ENCODE measurements at regions of chr16 and their contacts with region 1.

Region 1: DNA sequence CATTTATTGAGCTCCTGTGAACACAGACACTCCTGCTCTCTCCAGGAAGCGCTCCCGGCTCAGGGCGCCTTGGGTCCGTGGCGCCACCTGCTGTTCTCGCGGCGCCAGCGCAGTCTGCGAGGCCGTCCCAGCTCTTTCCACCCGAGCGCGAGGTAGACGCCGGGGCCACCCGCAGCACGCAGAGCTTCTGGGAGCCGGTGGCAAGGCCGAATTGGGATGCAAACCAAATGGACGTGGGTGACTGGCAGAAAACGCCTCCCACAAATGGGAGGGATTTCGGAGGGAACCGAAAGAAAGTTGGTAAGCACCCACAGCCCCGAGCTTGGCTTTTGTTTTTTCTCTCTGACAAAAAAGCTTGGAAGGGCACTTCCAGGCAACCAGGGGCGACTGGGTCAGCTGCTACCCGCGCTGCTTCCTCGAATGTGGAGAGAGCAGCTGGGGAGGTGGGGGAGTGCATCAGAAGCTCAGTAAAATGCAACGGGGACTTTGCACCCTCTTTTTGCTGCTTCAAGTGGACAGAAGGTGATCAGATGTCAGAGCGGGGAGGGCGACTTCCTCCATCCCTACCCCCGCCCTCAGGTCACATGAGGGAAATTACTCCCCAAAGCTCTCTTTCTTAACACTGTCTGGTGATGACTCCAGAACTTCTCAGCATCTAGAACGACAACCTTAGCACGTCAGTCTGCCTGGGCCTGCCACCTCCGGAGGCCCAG is 13.5 kb upstream of the N4BP1 start:
- DNase-seq: peak; percentile 70 to 84 (median 82)
- ATAC-seq: peak; percentile 93 to 96
- H3K4me3 Mint-ChIP-seq: peak overlapping the region; percentile 71 to 90 (median 86)
- H3K27ac Mint-ChIP-seq: peak overlapping the region; percentile 71 to 97 (median 92)
- H3K4me1 Mint-ChIP-seq: peaks cover 15 to 48% (median 30%) of the 10 kb centered on the region in 4 donors
- H3K27me3 Mint-ChIP-seq: no peaks in the 10 kb centered on the region

Region 2: DNA sequence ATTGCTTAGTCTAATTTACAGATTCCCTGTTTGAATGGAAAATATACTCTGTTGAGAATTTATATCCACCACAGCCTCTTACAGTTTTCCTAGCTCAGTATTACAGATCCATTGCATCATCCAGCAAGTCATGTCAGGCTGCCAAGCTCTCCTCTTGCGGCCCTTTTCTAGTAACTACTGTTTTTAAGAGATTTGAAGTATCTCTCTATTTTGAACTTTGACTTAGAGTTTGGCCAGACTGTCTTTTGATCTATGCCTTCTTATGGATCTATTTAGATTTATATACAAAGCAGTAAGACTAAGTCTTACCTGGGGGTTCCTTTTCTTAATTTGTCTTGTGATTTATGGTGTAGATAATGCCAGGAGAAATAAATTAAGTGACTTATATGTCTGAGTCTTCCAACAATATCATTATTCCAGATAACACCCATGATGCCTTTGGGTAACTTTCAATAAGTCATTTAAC is 323.0 kb before region 1 on chr16:
- POLR2A ChIA-PET with region 1: no interaction called
- DNase-seq: no peak
- ATAC-seq: no peak
- H3K4me3 Mint-ChIP-seq: no peak overlapping the region
- H3K27ac Mint-ChIP-seq: peak overlapping the region in 8 of 10 donors; percentile 0 to 69 (median 14)
- H3K4me1 Mint-ChIP-seq: peaks cover 0 to under 1% (median 0%) of the 10 kb centered on the region in 4 donors
- H3K27me3 Mint-ChIP-seq: no peaks in the 10 kb centered on the region

Region 3: DNA sequence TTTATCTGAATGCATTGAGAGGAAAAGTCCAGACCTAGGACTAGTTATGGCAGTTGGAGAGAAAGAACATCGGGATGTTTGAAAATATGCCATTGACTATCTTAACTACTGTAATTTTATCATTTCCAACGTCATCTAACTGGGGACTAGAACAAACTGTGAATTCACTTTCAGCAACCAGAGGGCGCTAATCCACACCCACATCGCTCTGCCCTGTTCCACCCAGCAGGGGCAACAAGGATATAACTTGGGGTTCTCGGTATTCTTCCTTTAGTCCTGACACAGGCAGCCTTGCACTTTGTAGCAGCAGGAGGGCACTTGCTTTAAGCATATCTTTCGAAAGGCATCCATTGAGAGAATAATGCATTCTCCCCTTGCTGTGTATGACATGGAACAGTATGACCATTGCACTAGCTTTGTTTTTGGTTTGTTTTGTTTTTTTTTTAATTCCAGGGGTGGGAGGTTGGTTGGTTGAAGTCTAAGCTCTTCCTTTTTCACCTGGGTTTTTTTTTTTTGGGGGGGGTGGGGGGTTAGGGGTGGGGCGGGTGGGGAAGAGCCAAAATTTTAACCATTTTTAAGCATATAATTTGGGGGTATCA is 269.8 kb before region 1 on chr16:
- POLR2A ChIA-PET with region 1: interaction called, 11 read pairs
- DNase-seq: peak; percentile 42 to 85 (median 69)
- ATAC-seq: peak; percentile 97 to 98
- H3K4me3 Mint-ChIP-seq: peak overlapping the region in 1 of 10 donors; percentile 20
- H3K27ac Mint-ChIP-seq: peak overlapping the region; percentile 43 to 87 (median 71)
- H3K4me1 Mint-ChIP-seq: peaks cover 6 to 15% (median 9%) of the 10 kb centered on the region in 4 donors
- H3K27me3 Mint-ChIP-seq: no peaks in the 10 kb centered on the region

Region 4: DNA sequence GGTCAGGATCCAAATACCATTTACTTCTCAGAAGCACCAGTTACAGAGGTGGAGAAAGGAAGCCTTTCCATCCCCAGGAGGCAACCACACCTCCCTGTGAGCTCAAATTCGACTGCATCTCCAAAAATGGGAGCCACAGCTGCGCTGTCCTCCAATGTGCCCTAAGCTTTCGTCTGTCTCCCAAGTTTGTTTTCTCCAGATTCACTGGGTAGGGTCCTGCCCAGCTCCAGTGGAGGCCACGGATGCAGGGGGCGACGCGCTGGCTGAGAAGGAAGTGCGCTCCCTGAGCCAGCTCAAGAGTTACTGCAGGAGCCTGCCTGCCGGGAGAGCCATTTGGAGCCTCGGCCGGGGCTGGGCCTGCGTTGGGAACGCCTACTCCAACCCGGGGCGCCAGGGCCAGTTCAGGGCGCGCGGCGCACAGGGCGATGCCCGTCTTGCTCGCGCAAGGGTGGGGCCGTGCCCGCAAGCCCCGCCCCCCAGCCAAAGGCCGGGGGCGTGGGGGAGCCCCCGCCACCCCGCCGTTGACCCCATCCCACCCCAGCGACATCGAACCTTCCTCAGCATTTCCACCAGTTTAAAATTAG is 257.8 kb before region 1 on chr16:
- POLR2A ChIA-PET with region 1: interaction called, 11 read pairs
- DNase-seq: peak; percentile 56 to 83 (median 71)
- ATAC-seq: peak; percentile 85 to 93
- H3K4me3 Mint-ChIP-seq: peak overlapping the region; percentile 87 to 96 (median 90)
- H3K27ac Mint-ChIP-seq: peak overlapping the region; percentile 89 to 99 (median 94)
- H3K4me1 Mint-ChIP-seq: peaks cover 23 to 50% (median 38%) of the 10 kb centered on the region in 4 donors
- H3K27me3 Mint-ChIP-seq: no peaks in the 10 kb centered on the region

Region 5: GRCh38 chr16:48385272-48386150 is 237.9 kb before region 1 on chr16 and contains the start of gene SIAH1:
- POLR2A ChIA-PET with region 1: interaction called, 10 read pairs
- DNase-seq: peak; percentile 80 to 95 (median 90)
- ATAC-seq: peak; percentile 78 to 83
- H3K4me3 Mint-ChIP-seq: peak within 1 kb of the TSS; percentile 87 to 99 (median 94)
- H3K27ac Mint-ChIP-seq: peak within 1 kb of the TSS; percentile 80 to 96 (median 92)
- H3K4me1 Mint-ChIP-seq: peaks cover 18 to 31% (median 24%) of the 10 kb centered on the region in 4 donors
- H3K27me3 Mint-ChIP-seq: no peaks in the 10 kb centered on the region
- polyA plus RNA-seq, gene SIAH1: 10.8 to 16.7 (median 12.0) TPM

Measured in naive thymus-derived CD8-positive, alpha-beta T cell (primary cell).